K562 (cell line): ENCODE measurements at regions of chr7 and their contacts with region 1.

Region 1: DNA sequence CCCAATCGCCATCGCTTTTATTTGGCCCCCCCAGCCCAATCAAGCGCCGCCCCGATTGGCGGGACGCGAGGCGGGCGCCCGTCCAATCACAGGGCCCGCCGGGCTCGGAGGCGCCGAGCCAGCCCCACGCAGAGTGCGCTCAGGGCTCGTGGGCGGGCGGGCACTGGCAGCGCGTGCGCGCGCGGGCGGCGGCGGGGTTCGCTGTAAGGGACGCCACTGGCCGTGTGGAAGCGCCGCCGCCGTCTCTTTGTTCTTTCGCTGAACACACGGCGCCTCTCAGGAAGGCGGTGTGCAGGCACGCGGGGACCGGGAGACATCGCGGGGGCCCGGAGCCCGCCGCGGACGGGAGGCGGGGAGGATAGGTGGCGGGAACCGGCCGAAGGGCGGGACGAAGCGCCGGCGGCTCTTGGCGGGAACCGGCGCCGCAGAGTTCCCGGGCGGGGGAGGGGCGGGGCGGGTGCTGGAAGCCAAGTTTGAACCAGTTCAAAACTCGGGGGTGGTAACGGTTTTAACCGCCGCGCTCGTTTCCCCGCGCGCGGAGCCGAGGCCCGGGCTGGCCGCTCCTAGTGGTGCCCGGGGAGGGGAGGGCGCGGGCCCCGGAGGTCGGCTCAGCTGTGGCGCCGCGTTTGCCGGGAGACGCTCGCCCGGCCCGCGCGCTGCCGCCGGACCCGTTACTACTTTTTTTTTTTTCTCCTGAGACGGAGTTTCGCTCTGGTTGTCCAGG is 370 bp upstream of the EZH2 start:
- DNase-seq: peak; percentile 99 to 100 (median 99)
- ATAC-seq: peak; percentile 92
- H3K4me3 ChIP-seq: peak overlapping the region; percentile 96
- H3K27ac ChIP-seq: peak overlapping the region; percentile 98
- H3K4me1 ChIP-seq: peaks cover 9 to 23% of the 10 kb centered on the region in 2 experiments; a peak in 4 of 5 replicates
- H3K27me3 ChIP-seq: no peaks in the 10 kb centered on the region
- CTCF ChIP-seq: no peak
- EP300 ChIP-seq: peak; percentile 81
- POLR2A ChIP-seq: peak; percentile 94
- RAD21 ChIP-seq: peak in 1 of 2 experiments; percentile 22; a peak in 1 of 4 replicates

Region 2: DNA sequence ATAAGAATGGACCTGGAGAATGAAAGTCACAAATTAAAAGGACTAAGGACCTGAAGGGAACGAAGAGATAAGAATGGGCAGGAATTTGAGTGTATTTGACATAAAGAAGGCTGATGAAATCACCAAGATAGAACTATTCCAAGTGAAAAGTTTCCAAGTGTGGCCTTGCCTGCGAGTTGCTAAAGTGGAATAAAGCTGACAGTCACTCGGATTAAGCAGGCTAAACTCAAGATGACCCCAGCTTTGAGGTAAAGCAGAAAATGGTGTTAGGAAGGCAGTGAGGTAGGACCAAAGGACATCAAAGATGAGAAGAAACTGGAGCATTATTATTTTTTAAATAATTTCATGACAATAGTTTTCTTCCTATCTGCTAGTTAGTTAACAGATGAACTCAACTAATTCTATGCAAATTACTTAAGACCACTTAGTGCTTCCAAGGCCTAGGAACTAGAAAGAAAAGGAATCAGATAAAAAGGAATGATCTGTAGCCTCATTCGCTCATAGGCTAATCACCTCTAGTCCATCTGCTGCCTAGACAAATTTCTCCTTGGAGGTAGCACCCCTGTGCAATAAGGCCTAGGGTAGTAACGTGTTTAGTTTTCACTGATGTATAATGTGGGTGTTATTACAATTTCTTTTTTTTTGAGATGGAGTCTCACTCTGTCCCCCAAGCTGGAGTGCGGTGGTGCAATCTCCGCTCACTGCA is 34.9 kb before region 1 on chr7:
- CTCF ChIA-PET with region 1: no interaction called
- POLR2A ChIA-PET with region 1: interaction called, 5 read pairs
- in situ Hi-C with region 1: no loop called
- intact Hi-C with region 1: loop called (anchors 2 kb)
- DNase-seq: peak in 2 of 4 experiments; percentile 37 to 56
- ATAC-seq: peak; percentile 43
- H3K4me3 ChIP-seq: no peak overlapping the region
- H3K27ac ChIP-seq: peak overlapping the region; percentile 6; the same call in 2 of the 3 replicates
- H3K4me1 ChIP-seq: peaks cover 24 to 63% of the 10 kb centered on the region in 2 experiments
- H3K27me3 ChIP-seq: no peaks in the 10 kb centered on the region
- CTCF ChIP-seq: no peak
- EP300 ChIP-seq: no peak; the same call in 1 of the 2 replicates
- POLR2A ChIP-seq: no peak
- RAD21 ChIP-seq: no peak

Region 3: GRCh38 chr7:148871030-148871429 is 13.4 kb before region 1 on chr7:
- CTCF ChIA-PET with region 1: no interaction called
- POLR2A ChIA-PET with region 1: interaction called, 37 read pairs
- in situ Hi-C with region 1: no loop called
- intact Hi-C with region 1: no loop called
- DNase-seq: no peak
- ATAC-seq: no peak
- H3K4me3 ChIP-seq: no peak overlapping the region
- H3K27ac ChIP-seq: no peak overlapping the region
- H3K4me1 ChIP-seq: peaks cover 31 to 43% of the 10 kb centered on the region in 2 experiments
- H3K27me3 ChIP-seq: no peaks in the 10 kb centered on the region
- CTCF ChIP-seq: no peak
- EP300 ChIP-seq: no peak
- POLR2A ChIP-seq: no peak
- RAD21 ChIP-seq: no peak

Region 4: DNA sequence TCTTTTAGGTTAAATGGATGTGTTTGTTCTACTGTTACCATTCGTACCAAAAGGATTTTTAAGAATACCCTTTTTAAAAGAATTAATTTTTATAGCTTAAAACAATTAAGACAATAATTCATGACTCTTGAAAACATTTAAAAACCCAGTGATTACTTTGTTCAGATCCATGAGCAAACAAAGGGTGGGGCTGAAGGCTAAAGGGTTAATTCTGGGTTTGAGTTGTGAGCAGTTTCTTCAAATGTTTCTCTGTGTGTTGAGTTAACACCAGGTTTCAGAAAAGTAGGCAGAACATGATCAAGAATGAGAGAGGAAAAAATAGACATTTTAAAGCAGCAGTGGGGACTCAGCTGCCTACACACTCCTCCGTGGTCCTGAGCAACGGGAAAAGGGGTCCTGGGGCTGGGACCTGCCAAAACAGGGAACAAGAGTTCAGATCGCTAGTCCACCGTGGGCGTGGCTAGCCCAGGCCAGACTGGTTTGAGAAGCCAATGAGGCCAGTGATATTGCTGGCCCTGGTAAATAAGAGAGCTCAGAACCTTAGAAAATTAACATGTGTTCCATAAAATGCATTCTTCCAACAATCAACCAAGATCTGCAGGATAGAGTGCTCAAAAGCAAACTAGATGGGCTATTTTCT is 14.5 kb after region 1 on chr7:
- CTCF ChIA-PET with region 1: no interaction called
- POLR2A ChIA-PET with region 1: interaction called, 20 read pairs
- in situ Hi-C with region 1: no loop called
- intact Hi-C with region 1: no loop called
- DNase-seq: peak; percentile 63 to 74 (median 68)
- ATAC-seq: peak; percentile 87
- H3K4me3 ChIP-seq: no peak overlapping the region
- H3K27ac ChIP-seq: no peak overlapping the region
- H3K4me1 ChIP-seq: peaks cover 0 to 6% of the 10 kb centered on the region in 2 experiments; a peak in 2 of 5 replicates
- H3K27me3 ChIP-seq: no peaks in the 10 kb centered on the region
- CTCF ChIP-seq: no peak
- EP300 ChIP-seq: no peak
- POLR2A ChIP-seq: no peak
- RAD21 ChIP-seq: no peak

Region 5: DNA sequence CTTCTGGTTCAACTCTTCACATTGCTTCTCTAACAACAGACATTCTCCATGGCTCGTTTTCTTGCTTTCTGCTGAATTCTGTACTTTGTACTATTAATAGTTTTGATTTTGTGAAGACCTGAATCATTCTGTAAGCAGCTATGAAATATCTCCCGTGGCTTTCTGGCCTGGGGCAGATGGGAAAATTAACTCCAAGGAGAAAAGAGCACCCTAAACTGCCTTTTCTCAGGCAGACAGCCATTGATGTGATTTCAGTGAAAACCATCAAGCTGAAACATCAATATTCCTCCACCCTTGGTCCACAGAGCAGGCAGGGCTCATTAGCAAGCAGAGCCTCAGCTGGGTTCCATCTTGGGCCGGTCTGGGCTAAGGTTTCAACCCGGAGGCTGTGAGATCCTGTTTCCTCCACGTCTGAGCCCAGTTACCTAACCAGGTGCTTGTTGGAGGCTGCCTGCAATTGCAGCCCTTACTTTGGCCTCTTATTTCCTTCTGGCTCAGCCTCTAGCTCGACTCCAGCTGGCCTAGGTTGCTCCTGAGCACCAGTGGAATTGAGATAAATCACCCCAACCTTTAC is 20.7 kb after region 1 on chr7:
- CTCF ChIA-PET with region 1: no interaction called
- POLR2A ChIA-PET with region 1: interaction called, 20 read pairs
- in situ Hi-C with region 1: no loop called
- intact Hi-C with region 1: no loop called
- DNase-seq: no peak
- ATAC-seq: peak; percentile 30
- H3K4me3 ChIP-seq: no peak overlapping the region
- H3K27ac ChIP-seq: no peak overlapping the region
- H3K4me1 ChIP-seq: no peaks in the 10 kb centered on the region; a peak in 2 of 5 replicates
- H3K27me3 ChIP-seq: peaks cover 17 to 32% of the 10 kb centered on the region in 2 experiments
- CTCF ChIP-seq: no peak
- EP300 ChIP-seq: no peak
- POLR2A ChIP-seq: no peak
- RAD21 ChIP-seq: no peak

Region 6: GRCh38 chr7:148962823-148963582 is 78.5 kb after region 1 on chr7:
- CTCF ChIA-PET with region 1: no interaction called
- POLR2A ChIA-PET with region 1: no interaction called
- in situ Hi-C with region 1: no loop called
- intact Hi-C with region 1: loop called (anchors 5 kb)
- DNase-seq: peak; percentile 61 to 86 (median 72)
- ATAC-seq: peak; percentile 65
- H3K4me3 ChIP-seq: peak overlapping the region; percentile 49
- H3K27ac ChIP-seq: peak overlapping the region; percentile 62
- H3K4me1 ChIP-seq: peaks cover 16 to 32% of the 10 kb centered on the region in 2 experiments; a peak in 4 of 5 replicates
- H3K27me3 ChIP-seq: no peaks in the 10 kb centered on the region
- CTCF ChIP-seq: peak; percentile 89 to 98 (median 97)
- EP300 ChIP-seq: peak; percentile 41; the same call in 1 of the 2 replicates
- POLR2A ChIP-seq: no peak
- RAD21 ChIP-seq: peak; percentile 95 to 96